ENCODE measurements at regions of chr11 and their contacts with region 1.

Region 1: DNA sequence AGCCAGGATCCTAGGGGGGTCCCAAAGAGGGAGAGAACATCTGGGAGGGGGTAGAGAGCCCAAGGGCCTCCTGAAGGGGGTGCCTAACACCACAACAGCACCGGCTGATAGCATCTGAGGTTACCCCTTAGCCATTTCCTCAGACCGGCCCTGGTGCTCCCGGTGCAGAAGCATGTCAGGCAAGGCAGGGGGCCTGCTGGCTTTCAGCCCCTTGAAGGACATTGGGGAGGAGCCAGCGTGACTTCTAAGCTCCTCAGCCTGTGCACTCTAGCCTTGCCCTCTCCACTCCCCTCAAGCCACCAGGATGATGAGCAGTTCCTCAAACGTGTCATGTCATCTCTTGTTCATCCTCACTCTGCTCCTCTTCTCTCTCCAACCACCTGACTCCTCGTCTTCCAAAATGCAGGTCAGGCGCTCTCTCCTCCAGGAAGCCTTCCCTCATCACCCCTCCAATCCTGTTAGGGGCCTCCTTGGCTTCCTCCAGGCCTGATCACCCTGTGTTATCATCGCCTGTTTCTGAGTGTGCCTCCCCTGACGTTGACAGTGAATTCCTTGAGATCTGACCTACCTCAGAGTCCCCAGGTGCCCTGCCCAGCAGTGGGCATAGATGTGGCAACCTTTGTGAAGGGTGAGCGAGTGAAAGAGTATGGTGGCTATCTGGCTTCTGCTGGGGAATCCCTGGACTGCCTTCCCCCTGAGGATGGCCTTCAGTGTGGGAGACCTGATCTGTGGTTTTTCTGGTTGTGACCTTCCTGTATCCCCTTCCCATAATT is 6.1 kb downstream of the P2RY2 start:
- DNase-seq: no peak
- H3K4me3 ChIP-seq: no peak overlapping the region
- CTCF ChIP-seq: no peak

Region 2: GRCh38 chr11:73269459-73270015 is 45.4 kb after region 1 on chr11:
- in situ Hi-C with region 1: loop called (anchors 5 kb)
- DNase-seq: no peak
- H3K4me3 ChIP-seq: no peak overlapping the region
- CTCF ChIP-seq: no peak

Region 3: GRCh38 chr11:73307323-73308002 is 83.3 kb after region 1 on chr11:
- in situ Hi-C with region 1: no loop called
- DNase-seq: peak; percentile 97
- H3K4me3 ChIP-seq: peak overlapping the region; percentile 75
- CTCF ChIP-seq: peak; percentile 77

Measured in astrocyte of the cerebellum (primary cell).